Left cardiac atrium (tissue), 4 donors: ENCODE measurements at regions of chr10 and their contacts with region 1.

Region 1: DNA sequence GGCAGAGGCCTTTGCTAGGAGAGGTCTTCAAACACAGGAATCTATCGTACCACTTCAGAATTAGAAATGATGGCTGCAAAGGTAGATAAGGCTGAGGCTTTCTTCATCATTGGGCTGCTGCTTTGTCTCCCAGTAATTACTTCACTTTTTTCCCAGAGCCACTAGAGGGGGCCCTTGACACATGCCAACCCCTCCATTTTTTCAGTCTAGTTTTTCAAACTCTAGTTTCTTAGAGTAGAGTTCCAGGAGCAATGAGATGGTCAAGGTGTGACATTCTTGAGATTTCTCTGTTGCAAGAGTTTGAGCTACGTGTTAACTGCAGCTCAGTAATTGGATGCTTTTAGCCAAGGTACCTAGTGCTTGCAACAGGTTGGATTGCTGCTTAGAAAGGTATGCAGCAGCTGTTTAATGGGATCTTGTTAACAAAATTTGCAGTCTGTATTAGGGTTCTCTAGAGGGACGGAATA is 33.8 kb upstream of the RBM20 start:
- DNase-seq: no peak
- ATAC-seq: peak; percentile 61 to 66

Region 2: GRCh38 chr10:110671788-110672579 is 61.6 kb after region 1 on chr10:
- intact Hi-C with region 1: loop called in 1 of 2 experiments (anchors 1 kb)
- DNase-seq: peak; percentile 82
- ATAC-seq: peak; percentile 88 to 92

Region 3: GRCh38 chr10:110746254-110746826 is 136.0 kb after region 1 on chr10:
- intact Hi-C with region 1: loop called in 1 of 2 experiments (anchors 5 kb)
- DNase-seq: peak; percentile 47
- ATAC-seq: peak; percentile 66 to 69